ENCODE measurements at regions of chr1 and their contacts with region 1.

Region 1: DNA sequence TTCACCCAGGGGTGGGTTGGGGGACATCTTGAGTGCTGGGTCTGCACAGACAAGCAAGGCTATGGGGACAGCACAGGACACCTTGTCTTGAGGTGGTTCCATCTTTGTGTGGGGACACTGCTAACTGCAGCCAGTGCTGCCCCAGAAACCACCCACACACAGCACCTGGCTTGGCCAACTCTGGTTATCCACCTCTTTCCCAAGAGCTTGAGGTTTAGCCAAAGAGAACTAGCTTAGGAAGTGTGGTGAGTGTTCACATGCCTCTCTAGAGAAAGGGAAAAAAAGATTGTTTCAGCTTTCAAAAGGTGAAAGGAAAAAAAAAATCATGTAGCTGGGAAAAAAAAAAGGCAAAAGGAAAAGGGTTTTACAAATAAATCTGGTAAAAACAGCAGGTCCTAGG is 32.4 kb downstream of the BCAR3 start:
- DNase-seq: no peak
- H3K4me3 ChIP-seq: no peak overlapping the region
- H3K27ac ChIP-seq: no peak overlapping the region
- H3K4me1 ChIP-seq: peaks cover 3 to 13% (median 4%) of the 10 kb centered on the region in 4 experiments; a peak in 5 of 7 replicates
- H3K27me3 ChIP-seq: no peaks in the 10 kb centered on the region
- CTCF ChIP-seq: no peak
- EP300 ChIP-seq: no peak
- POLR2A ChIP-seq: no peak
- RAD21 ChIP-seq: no peak

Region 2: GRCh38 chr1:93635614-93636543 is 13.4 kb before region 1 on chr1:
- CTCF ChIA-PET with region 1: interaction called, 62 read pairs
- POLR2A ChIA-PET with region 1: interaction called, 18 read pairs
- DNase-seq: peak in 1 of 2 experiments; percentile 71
- H3K4me3 ChIP-seq: peak overlapping the region in 3 of 4 experiments; percentile 8 to 19 (median 12); a peak in 3 of 8 replicates
- H3K27ac ChIP-seq: peak overlapping the region; percentile 79; the same call in 1 of the 2 replicates
- H3K4me1 ChIP-seq: peaks cover 0 to 16% (median 12%) of the 10 kb centered on the region in 4 experiments; a peak in 6 of 7 replicates
- H3K27me3 ChIP-seq: no peaks in the 10 kb centered on the region
- CTCF ChIP-seq: no peak
- EP300 ChIP-seq: peak in 1 of 2 experiments; percentile 67; a peak in 1 of 3 replicates
- POLR2A ChIP-seq: peak in 1 of 2 experiments; percentile 55; a peak in 1 of 3 replicates
- RAD21 ChIP-seq: 0 out of 4 replicates have a peak, but pooled peaks have one; percentile 2 to 4

Region 3: GRCh38 chr1:93705892-93706500 is 56.8 kb after region 1 on chr1:
- CTCF ChIA-PET with region 1: no interaction called
- POLR2A ChIA-PET with region 1: no interaction called
- DNase-seq: no peak
- H3K4me3 ChIP-seq: no peak overlapping the region
- H3K27ac ChIP-seq: no peak overlapping the region
- H3K4me1 ChIP-seq: peaks cover 0 to 7% (median 2%) of the 10 kb centered on the region in 4 experiments; a peak in 3 of 7 replicates
- H3K27me3 ChIP-seq: peaks cover 0 to 1% (median 0%) of the 10 kb centered on the region in 4 experiments; a peak in 1 of 7 replicates
- CTCF ChIP-seq: no peak
- EP300 ChIP-seq: no peak
- POLR2A ChIP-seq: no peak
- RAD21 ChIP-seq: no peak

Measured in H1 (cell line).